WTC11 (cell line): ENCODE measurements at regions of chr5 and their contacts with region 1.

Region 1: DNA sequence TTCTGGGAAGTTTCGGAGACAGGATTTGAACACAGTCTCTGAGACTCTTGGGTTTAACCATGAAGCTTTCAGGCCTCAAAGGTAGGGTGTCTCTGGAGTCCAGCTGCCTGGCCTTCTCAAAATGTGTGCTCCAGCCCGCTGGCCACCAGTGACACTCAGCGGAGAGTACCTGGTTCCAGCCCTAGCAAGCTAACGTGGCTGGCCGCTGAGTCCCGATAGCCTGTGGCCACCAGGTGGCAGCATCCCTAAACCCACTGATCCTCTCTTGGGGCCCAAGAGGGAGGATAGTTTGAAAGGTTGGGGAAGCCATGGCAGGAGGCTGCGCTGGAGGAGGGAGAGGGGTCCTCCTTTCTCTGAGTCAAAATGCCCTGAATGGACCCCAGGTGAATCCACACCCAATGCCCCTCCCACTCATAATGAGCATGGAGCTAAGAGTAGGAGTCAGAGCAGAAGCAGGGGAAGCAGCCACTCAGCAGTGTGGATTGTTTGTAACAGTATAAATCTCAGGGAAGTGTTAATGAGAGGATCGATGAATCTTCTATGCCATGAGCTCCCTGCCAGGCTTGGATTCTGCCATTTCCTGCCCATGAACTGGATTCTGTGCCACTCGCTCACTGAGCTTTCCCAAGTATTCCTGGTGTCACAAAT is 5.4 kb upstream of the TIFAB start:
- DNase-seq: peak; percentile 88
- ATAC-seq: peak; percentile 81
- H3K4me3 Mint-ChIP-seq: no peak overlapping the region
- H3K27ac Mint-ChIP-seq: no peak overlapping the region
- H3K4me1 Mint-ChIP-seq: peaks cover 3% of the 10 kb centered on the region; the same call in 1 of the 2 replicates
- H3K27me3 Mint-ChIP-seq: peaks cover 51% of the 10 kb centered on the region
- CTCF ChIP-seq: peak; percentile 73

Region 2: GRCh38 chr5:135410348-135410747 is 47.2 kb before region 1 on chr5:
- CTCF ChIA-PET with region 1: no interaction called
- POLR2A ChIA-PET with region 1: no interaction called
- DNase-seq: no peak
- ATAC-seq: no peak
- H3K4me3 Mint-ChIP-seq: no peak overlapping the region
- H3K27ac Mint-ChIP-seq: no peak overlapping the region
- H3K4me1 Mint-ChIP-seq: no peaks in the 10 kb centered on the region
- H3K27me3 Mint-ChIP-seq: peaks cover 67% of the 10 kb centered on the region
- CTCF ChIP-seq: no peak

Region 3: GRCh38 chr5:135426102-135427082 is 31.2 kb before region 1 on chr5:
- CTCF ChIA-PET with region 1: interaction called, 19 read pairs
- POLR2A ChIA-PET with region 1: no interaction called
- DNase-seq: no peak
- ATAC-seq: peak; percentile 89
- H3K4me3 Mint-ChIP-seq: no peak overlapping the region
- H3K27ac Mint-ChIP-seq: no peak overlapping the region
- H3K4me1 Mint-ChIP-seq: no peaks in the 10 kb centered on the region
- H3K27me3 Mint-ChIP-seq: peaks cover 24% of the 10 kb centered on the region
- CTCF ChIP-seq: peak; percentile 51

Region 4: DNA sequence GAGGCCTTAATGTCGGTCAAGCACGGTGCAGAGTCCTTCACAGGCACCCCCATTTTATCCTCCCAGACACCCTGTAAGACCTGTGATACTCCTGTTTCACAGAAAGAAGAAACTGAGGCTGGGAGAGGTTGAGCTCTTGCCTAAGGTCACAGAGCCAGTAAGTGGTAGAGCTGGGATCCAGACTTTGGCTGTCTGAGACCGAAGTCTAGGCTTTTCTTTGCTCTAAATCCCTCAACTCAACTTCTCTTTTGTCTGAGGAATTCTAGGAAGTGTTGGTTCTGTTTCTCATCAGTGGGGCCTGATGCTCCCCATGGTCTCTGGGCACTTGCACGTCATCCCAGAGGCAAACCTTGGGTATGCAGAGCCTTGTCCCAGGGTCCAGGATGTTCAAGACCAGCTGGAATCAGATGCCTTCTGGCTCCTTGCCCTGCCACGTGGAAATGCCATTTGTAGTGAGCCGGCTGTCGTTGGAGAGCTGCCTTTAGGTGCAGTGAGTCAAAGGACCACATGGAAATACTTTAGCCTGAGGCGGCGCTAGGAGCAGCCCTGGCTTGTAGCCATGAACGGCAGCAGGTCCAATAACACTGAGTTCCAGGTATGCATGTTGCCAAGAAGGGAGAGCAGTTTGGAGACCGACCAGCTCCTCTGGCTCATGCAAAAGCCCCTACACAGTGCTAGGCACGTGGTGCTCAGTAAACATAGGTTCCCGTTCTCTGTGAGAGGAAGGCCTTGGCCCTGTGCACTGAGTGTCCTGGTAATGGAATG is 19.6 kb before region 1 on chr5:
- CTCF ChIA-PET with region 1: interaction called, 22 read pairs
- POLR2A ChIA-PET with region 1: interaction called, 3 read pairs
- DNase-seq: no peak
- ATAC-seq: no peak
- H3K4me3 Mint-ChIP-seq: no peak overlapping the region
- H3K27ac Mint-ChIP-seq: no peak overlapping the region
- H3K4me1 Mint-ChIP-seq: peaks cover 9% of the 10 kb centered on the region
- H3K27me3 Mint-ChIP-seq: no peaks in the 10 kb centered on the region
- CTCF ChIP-seq: no peak

Region 5: DNA sequence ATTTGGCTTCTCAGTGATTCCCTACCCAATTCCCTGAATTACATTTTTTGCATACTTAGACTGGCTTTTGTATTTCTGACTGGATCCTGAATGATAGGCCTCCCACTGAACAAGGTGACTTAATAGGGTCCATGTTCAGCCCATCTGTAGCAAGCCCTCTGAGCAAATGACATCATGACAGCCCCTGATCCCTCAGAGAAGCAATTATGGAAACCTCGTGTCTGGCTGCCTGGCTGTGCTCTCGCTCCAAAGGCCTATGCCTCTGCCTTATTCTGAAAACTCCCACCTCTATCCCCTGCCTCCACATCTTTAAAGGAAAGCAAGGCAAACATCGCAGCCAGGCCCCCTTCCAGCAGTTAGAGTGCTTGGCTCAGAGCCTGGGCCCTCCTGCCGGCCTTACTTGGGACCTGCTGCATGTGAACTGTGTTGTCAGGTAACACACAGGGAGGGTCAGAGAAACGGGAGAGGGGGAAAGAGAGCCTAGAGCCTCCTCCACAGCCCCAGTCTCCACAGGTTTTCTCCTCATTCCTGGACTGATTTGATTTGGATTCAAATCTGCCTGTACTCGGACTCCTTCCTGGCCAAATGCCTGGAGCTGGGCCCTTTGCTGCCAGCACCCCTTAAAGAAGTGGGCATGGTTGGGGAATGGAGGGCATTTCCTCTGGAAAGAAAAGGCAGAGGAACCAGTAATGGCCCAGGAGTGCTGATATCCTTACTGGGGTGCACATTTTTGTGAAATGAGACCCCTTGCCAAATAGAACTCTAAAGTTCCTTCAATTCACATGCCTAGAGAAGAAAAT is 14.2 kb before region 1 on chr5:
- CTCF ChIA-PET with region 1: interaction called, 22 read pairs
- POLR2A ChIA-PET with region 1: interaction called, 3 read pairs
- DNase-seq: no peak
- ATAC-seq: no peak; the same call in 1 of the 2 replicates
- H3K4me3 Mint-ChIP-seq: no peak overlapping the region
- H3K27ac Mint-ChIP-seq: no peak overlapping the region
- H3K4me1 Mint-ChIP-seq: peaks cover 8% of the 10 kb centered on the region
- H3K27me3 Mint-ChIP-seq: no peaks in the 10 kb centered on the region
- CTCF ChIP-seq: no peak

Region 6: GRCh38 chr5:135560858-135561257 is 103.3 kb after region 1 on chr5:
- CTCF ChIA-PET with region 1: interaction called, 524 read pairs
- POLR2A ChIA-PET with region 1: no interaction called
- DNase-seq: peak; percentile 89
- ATAC-seq: peak; percentile 92
- H3K4me3 Mint-ChIP-seq: no peak overlapping the region
- H3K27ac Mint-ChIP-seq: no peak overlapping the region
- H3K4me1 Mint-ChIP-seq: peaks cover 25% of the 10 kb centered on the region
- H3K27me3 Mint-ChIP-seq: peaks cover 39% of the 10 kb centered on the region
- CTCF ChIP-seq: peak; percentile 77